GM12878 (cell line): ENCODE measurements at regions of chr17 and their contacts with region 1.

Region 1: GRCh38 chr17:36133602-36134236 is 30.1 kb downstream of the CCL4 start:
- DNase-seq: no peak
- ATAC-seq: no peak
- H3K4me3 ChIP-seq: no peak overlapping the region
- H3K27ac ChIP-seq: no peak overlapping the region
- H3K4me1 ChIP-seq: peaks cover 29% of the 10 kb centered on the region
- H3K27me3 ChIP-seq: no peaks in the 10 kb centered on the region
- CTCF ChIP-seq: no peak
- EP300 ChIP-seq: no peak
- POLR2A ChIP-seq: no peak
- RAD21 ChIP-seq: no peak

Region 2: GRCh38 chr17:35981908-35982330 is 151.8 kb before region 1 on chr17:
- CTCF ChIA-PET with region 1: interaction called, 6 read pairs
- POLR2A ChIA-PET with region 1: no interaction called
- RAD21 ChIA-PET with region 1: interaction called, 8 read pairs
- SMC1A ChIA-PET with region 1: interaction called, 13 read pairs
- in situ Hi-C with region 1: no loop called
- intact Hi-C with region 1: no loop called
- DNase-seq: no peak
- ATAC-seq: peak; percentile 49
- H3K4me3 ChIP-seq: no peak overlapping the region
- H3K27ac ChIP-seq: no peak overlapping the region
- H3K4me1 ChIP-seq: peaks cover 6% of the 10 kb centered on the region; the same call in 1 of the 2 replicates
- H3K27me3 ChIP-seq: no peaks in the 10 kb centered on the region
- CTCF ChIP-seq: peak; percentile 36 to 46 (median 39); a peak in 5 of 6 replicates
- EP300 ChIP-seq: no peak
- POLR2A ChIP-seq: no peak
- RAD21 ChIP-seq: peak; percentile 71

Region 3: GRCh38 chr17:36107660-36108059 is 26.1 kb before region 1 on chr17:
- CTCF ChIA-PET with region 1: interaction called, 5 read pairs
- POLR2A ChIA-PET with region 1: interaction called, 5 read pairs
- RAD21 ChIA-PET with region 1: interaction called, 9 read pairs
- SMC1A ChIA-PET with region 1: interaction called, 25 read pairs
- in situ Hi-C with region 1: no loop called
- intact Hi-C with region 1: no loop called
- DNase-seq: no peak
- ATAC-seq: no peak
- H3K4me3 ChIP-seq: no peak overlapping the region
- H3K27ac ChIP-seq: no peak overlapping the region
- H3K4me1 ChIP-seq: peaks cover 13% of the 10 kb centered on the region
- H3K27me3 ChIP-seq: no peaks in the 10 kb centered on the region
- CTCF ChIP-seq: no peak
- EP300 ChIP-seq: no peak
- POLR2A ChIP-seq: no peak
- RAD21 ChIP-seq: no peak

Region 4: DNA sequence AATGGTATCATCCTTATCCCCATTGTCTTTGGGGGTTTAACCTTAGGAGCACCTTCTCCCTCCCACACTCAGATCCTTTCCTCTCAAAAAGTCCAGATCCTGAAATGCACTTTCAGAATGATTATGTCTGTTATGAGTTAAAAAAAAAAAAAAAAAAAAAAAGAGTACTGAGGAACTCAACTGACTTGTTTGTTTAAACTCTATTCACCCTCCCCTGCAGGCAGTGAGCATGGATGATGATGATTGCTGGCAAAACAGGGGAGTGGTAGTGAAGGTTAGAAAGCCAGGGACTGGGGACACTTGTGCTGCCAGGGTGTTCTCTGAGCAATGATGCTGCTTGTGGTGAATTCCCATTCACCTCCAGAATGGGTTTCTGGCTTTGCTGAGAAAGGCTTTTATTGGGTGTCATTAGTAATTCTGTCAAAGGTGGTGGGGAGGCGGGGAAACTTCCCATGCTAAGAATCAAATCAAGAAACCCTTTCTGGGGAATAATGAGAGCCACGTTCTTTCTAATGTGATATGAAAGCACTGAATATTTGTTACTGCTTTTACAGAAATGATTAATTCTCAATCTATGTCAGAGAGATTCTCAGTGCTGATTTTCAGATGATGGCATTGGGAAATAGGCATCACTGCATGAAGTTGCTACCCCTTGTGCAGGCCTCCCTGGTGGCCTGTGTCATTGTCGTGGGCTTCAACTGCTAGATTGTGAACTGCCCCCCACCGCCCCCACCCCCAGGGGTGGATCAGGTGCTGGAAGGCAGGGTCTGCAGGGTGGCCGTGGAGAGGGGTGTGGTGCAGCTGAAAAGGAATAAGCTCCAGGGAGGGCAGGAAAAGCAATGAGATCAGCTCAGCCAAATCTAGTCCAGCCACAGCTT is 16.0 kb before region 1 on chr17:
- CTCF ChIA-PET with region 1: interaction called, 4 read pairs
- POLR2A ChIA-PET with region 1: interaction called, 16 read pairs
- RAD21 ChIA-PET with region 1: interaction called, 36 read pairs
- SMC1A ChIA-PET with region 1: interaction called, 128 read pairs
- in situ Hi-C with region 1: no loop called
- intact Hi-C with region 1: no loop called
- DNase-seq: no peak
- ATAC-seq: peak; percentile 89
- H3K4me3 ChIP-seq: no peak overlapping the region
- H3K27ac ChIP-seq: no peak overlapping the region
- H3K4me1 ChIP-seq: peaks cover 18% of the 10 kb centered on the region
- H3K27me3 ChIP-seq: no peaks in the 10 kb centered on the region
- CTCF ChIP-seq: no peak
- EP300 ChIP-seq: no peak; a peak in 1 of 4 replicates
- POLR2A ChIP-seq: no peak
- RAD21 ChIP-seq: no peak